ENCODE measurements at regions of chr10 and their contacts with region 1.

Region 1: DNA sequence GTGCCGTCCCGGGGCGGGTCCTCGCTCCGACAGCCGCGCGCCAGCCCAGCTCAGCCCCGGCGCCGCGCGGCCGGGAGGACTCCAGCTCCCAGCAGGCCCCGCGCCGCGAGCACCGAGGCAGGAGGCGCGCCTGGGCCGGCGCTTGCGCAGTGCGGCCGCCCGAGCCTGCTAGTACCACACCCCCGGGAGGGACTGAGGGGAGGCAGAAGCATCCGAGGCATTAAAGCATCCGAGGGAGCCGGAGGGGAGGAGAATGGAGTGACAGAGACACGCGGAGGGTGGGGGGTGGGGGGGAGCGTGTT is at the start of gene GRK5:
- DNase-seq: peak; percentile 98
- ATAC-seq: peak; percentile 89
- H3K4me3 Mint-ChIP-seq: peak within 1 kb of the TSS; percentile 97
- H3K27ac Mint-ChIP-seq: peak within 1 kb of the TSS; percentile 99
- H3K4me1 Mint-ChIP-seq: peaks cover 42% of the 10 kb centered on the region
- H3K27me3 Mint-ChIP-seq: no peaks in the 10 kb centered on the region
- total RNA-seq, gene GRK5: 19.6 to 21.8 TPM

Region 2: DNA sequence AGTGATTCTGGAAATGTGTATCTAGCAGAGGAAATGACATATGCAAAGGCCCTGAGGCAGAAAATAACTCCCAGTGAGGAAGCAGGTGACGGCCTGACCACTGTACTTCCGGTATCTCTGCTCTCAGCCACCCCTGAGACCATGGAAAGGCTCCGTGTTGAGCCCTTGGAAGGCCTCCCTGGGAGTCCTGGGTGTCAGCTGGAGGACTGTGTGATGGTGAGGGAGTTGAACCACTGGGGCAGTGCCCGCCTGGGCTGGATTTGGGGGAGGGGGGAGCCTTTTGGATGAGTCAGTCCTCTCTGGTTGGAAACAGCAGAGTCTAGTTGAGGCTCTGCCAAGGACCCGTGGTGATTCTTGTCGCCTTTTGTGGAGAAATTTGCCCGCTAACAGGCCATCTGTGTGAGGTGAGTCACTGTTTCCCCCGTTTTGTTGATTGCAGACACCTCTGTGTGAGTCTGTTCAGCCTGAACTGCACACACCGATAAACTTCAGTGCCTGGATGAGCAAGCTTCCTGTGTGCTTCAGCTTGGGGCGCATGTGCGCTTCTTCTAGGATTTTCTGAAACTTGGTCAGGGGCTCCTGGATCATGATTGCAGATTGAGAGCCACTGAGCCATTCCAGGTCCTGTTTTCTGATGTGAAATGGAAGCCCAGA is 98.7 kb after region 1 on chr10:
- POLR2A ChIA-PET with region 1: interaction called, 25 read pairs
- DNase-seq: peak; percentile 76
- ATAC-seq: peak; percentile 85
- H3K4me3 Mint-ChIP-seq: peak overlapping the region; percentile 88
- H3K27ac Mint-ChIP-seq: peak overlapping the region; percentile 98
- H3K4me1 Mint-ChIP-seq: peaks cover 70% of the 10 kb centered on the region
- H3K27me3 Mint-ChIP-seq: peaks cover 11% of the 10 kb centered on the region

Region 3: GRCh38 chr10:119416855-119417254 is 209.5 kb after region 1 on chr10:
- POLR2A ChIA-PET with region 1: interaction called, 10 read pairs
- DNase-seq: peak; percentile 76
- ATAC-seq: peak; percentile 80
- H3K4me3 Mint-ChIP-seq: no peak overlapping the region
- H3K27ac Mint-ChIP-seq: no peak overlapping the region
- H3K4me1 Mint-ChIP-seq: no peaks in the 10 kb centered on the region
- H3K27me3 Mint-ChIP-seq: no peaks in the 10 kb centered on the region

Region 4: DNA sequence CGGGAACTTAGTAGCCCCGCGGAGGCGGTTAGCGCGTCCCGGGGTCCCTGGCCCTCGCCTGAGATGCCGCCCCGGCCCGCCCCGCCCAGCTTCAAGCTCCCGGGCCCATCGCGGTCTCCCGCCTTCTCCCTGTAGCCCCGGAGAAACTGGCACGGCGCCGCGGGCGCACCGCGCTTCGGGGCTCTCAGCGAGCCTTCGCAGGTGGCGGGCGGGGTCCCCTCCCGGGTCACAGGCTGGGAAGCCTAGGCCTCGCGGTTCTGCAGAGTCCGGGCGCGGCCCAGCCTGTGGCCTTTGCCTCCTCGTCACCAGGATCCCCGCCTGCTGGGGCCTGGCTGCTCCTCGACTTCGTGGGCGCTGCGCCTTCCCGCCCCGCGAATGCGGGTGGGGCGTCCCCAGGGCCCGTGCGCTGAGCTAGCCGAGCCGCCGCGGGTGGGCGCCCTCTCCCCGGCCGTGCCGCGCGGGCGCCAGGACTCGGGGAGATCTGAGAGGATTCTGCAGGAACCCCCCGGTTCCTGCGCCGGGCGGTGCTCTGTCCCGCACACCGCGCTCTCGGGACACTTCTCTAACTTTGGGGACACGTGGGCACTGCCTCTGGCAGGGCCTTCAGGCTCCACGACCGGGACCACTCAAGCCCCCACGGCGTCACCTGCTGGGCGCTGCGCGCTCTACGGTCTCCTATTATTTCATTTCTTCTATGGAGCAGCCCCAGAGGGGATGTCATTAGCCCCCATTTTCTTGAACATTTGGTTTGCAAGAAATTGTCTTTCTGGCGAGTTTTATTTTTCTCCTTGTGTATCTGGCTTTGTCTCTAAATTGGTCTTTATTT is 335.9 kb after region 1 on chr10:
- POLR2A ChIA-PET with region 1: interaction called, 13 read pairs
- DNase-seq: peak; percentile 81
- ATAC-seq: peak; percentile 25
- H3K4me3 Mint-ChIP-seq: peak overlapping the region; percentile 87
- H3K27ac Mint-ChIP-seq: peak overlapping the region; percentile 91
- H3K4me1 Mint-ChIP-seq: peaks cover 29% of the 10 kb centered on the region
- H3K27me3 Mint-ChIP-seq: peaks cover 14% of the 10 kb centered on the region

Measured in activated naive CD8-positive, alpha-beta T cell treated with anti-CD3 and anti-CD28 coated beads, Interleukin-2, amount 10 ng/mL, durations not matched to agents 7 days and 5 days (primary cell).